ENCODE measurements at regions of chr14 and their contacts with region 1.

Region 1: GRCh38 chr14:60248697-60249318 is at the start of gene PPM1A:
- DNase-seq: peak; percentile 96
- H3K4me3 ChIP-seq: peak within 1 kb of the TSS; percentile 81 to 98 (median 96)
- H3K27ac ChIP-seq: peak within 1 kb of the TSS; percentile 85
- H3K4me1 ChIP-seq: peaks cover 26% of the 10 kb centered on the region
- H3K27me3 ChIP-seq: no peaks in the 10 kb centered on the region
- CTCF ChIP-seq: no peak
- POLR2A ChIP-seq: peak; percentile 65
- total RNA-seq, gene PPM1A: 33.9 and 36.4 TPM in 2 replicates

Region 2: DNA sequence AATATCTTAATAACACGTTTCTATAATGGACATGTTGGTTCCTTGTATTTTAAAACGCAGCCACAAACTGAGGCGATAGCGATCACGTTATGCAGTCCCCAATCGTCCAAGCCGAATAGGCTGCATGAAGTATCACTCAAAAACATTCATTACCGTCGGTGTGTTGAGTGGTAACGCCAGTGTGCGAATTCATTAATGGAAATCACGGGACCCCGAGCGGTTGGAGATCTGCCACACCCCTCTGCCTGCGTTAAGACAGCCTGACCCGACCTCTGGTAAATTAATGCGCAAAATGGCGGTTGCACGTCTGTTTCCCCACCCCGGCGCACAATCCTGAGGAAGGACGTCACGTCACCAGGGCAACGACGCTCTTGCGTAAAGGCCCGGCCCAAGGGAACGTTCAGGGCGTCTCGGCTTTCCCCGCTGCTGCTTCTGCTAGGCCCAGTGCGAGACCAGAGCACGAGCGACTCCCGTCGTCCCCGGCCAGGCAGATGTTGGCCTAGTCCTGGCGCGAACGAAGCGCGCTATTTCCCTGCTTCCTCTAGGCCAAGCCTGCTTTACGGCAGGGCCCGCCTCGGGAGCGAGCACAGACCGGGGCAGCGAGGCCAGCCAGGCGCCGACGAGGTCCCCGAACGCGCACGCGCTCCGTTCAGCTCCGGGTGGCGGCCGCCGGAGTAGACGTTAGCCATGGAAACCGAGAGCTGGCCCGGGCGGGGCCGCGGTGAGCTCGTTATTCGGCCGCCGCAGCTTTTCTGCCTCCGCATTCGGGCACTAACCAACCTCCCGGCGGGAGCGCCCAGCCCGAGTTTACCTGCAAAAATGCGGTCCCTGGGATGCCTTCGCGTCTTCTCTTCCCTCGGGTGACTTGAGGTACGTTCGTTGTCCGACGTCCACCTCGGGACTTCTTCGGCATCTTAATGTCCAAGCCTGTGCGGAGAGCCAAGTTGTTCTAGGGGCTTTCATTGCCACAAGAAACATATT is 157.0 kb before region 1 on chr14 and contains the start of gene PCNX4:
- CTCF ChIA-PET with region 1: no interaction called
- POLR2A ChIA-PET with region 1: no interaction called
- dilution Hi-C with region 1: no loop called
- intact Hi-C with region 1: loop called (anchors 1 kb)
- DNase-seq: peak; percentile 99
- H3K4me3 ChIP-seq: peak within 1 kb of the TSS; percentile 68 to 86 (median 86)
- H3K27ac ChIP-seq: peak within 1 kb of the TSS; percentile 93
- H3K4me1 ChIP-seq: peaks cover 25% of the 10 kb centered on the region
- H3K27me3 ChIP-seq: no peaks in the 10 kb centered on the region
- CTCF ChIP-seq: no peak
- POLR2A ChIP-seq: peak; percentile 96
- total RNA-seq, gene PCNX4: 41.4 and 51.6 TPM in 2 replicates

Region 3: DNA sequence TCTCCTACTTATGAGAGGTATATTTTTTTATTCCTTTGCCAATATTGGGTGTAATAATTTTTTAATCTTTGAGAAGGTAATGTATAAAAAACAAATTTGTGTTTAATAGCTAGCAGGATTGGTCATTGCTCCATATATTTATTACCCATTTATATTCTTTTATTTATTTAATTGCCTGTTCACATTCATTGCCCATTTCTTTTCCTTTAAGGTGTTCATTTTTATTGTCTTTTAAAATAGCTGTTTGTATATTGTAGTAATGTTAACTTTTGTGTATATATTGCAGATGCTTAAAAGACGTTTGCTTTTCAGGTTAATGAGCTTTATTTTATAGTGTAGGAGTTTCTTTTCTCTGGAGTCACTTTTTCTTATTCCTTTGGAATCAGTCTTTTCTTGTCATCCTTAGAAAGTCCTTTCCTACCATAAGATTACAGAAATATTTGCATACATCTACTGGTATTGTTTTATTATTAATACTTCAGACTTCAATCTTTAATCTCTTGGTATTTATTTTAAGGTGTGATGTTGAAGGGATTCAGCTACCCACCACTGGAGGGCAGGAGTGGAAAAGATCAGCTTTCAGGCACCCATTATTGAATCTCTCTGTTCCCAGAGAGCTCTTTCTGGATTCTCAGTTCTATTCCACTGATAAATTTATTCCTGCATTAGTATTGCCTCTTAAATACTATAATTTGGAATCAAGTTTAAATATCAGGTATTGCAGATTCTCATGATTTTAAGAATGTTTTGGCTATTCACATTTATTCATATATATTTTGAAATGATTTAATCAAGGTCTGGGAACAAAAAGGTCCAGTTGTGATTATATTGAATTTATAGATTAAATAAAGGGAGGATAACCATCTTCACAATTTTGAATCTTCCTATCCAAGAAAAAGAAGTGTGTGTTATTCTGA is 17.5 kb after region 1 on chr14:
- CTCF ChIA-PET with region 1: interaction called, 16 read pairs
- POLR2A ChIA-PET with region 1: no interaction called
- dilution Hi-C with region 1: no loop called
- intact Hi-C with region 1: loop called (anchors 2 kb)
- DNase-seq: peak; percentile 44
- H3K4me3 ChIP-seq: no peak overlapping the region
- H3K27ac ChIP-seq: no peak overlapping the region
- H3K4me1 ChIP-seq: no peaks in the 10 kb centered on the region
- H3K27me3 ChIP-seq: no peaks in the 10 kb centered on the region
- CTCF ChIP-seq: peak; percentile 47 to 52
- POLR2A ChIP-seq: no peak

Region 4: DNA sequence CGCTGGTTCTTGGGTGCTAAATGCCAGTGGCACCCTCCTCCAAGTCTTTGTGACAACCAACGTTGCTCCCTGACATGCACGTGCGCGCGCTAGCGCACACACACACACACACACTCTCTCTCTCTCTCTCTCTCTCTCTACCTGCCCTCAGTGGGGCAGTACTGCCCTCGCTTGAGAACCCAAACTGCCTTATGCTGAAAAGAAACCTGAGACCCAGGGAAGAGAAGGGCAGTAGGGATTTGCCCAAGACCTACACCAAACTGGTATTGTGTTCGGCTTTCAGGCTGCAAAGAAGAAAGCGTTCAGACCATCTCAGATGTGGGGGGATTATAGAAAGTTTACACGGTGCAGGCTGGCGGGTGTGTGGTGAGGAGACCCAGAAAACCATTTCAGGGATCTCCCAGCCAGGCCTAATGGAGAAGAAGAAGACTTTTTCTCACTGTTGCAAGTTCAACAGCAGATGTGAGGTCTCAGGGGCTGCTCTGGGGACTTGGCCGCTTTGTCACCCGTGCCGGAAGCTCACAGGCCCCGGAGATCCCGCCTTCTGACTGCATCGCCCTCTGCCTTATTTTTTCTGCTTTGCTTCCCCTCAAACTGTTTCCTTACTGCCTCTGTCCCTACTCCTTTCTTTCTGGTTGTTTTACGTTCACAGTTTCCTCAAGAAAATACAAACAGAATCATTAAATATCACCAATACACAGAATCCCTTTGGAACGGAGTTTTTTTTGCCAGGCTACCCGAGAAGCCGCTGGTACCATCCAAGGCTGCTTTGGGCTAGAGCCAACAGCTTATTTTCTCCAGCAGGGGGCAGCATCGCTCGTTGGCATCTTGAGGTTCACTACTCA is 82.6 kb after region 1 on chr14:
- CTCF ChIA-PET with region 1: interaction called, 10 read pairs
- POLR2A ChIA-PET with region 1: no interaction called
- dilution Hi-C with region 1: no loop called
- intact Hi-C with region 1: loop called (anchors 2 kb)
- DNase-seq: peak; percentile 78
- H3K4me3 ChIP-seq: peak overlapping the region; percentile 30 to 66 (median 41)
- H3K27ac ChIP-seq: no peak overlapping the region
- H3K4me1 ChIP-seq: peaks cover 2% of the 10 kb centered on the region
- H3K27me3 ChIP-seq: peaks cover 36 to 38% of the 10 kb centered on the region in 2 experiments
- CTCF ChIP-seq: peak; percentile 82 to 84
- POLR2A ChIP-seq: no peak

Region 5: DNA sequence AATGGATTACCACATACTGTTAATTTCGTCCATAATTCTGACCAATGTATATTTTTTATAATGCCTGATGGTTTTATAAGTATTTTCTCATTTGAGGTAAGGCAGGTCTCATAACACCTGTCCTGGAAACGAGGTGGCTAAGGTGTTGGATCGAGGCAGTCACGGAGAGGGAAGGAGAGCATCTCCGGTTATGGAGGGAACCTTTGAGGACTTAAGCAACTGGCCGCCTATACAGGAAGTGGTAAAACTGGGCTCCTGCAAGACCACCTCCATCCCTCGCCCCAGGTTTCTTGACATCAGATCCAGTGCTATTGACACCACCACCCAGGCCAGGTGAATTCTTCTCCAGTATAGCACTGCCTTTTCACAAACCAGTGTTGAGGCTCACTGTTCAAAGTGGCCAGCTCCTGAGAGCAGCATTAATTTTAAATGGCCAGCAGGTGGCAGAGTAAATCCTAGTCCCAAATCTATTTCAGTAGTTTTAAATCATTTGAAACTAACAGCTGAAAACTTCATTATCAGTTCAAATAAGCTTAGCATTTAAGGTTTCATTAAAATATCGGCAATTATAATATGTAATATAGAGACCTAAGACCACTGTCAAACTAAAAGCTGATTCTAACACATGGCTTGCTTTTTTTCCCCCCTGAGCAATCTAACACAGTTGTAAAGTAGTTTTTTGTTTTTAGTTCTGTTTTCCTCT is 101.0 kb after region 1 on chr14:
- CTCF ChIA-PET with region 1: no interaction called
- POLR2A ChIA-PET with region 1: no interaction called
- dilution Hi-C with region 1: no loop called
- intact Hi-C with region 1: no loop called
- DNase-seq: peak; percentile 51
- H3K4me3 ChIP-seq: no peak overlapping the region
- H3K27ac ChIP-seq: no peak overlapping the region
- H3K4me1 ChIP-seq: peaks cover 4% of the 10 kb centered on the region
- H3K27me3 ChIP-seq: peaks cover 8 to 24% of the 10 kb centered on the region in 2 experiments
- CTCF ChIP-seq: peak; percentile 54 to 59
- POLR2A ChIP-seq: no peak

Region 6: DNA sequence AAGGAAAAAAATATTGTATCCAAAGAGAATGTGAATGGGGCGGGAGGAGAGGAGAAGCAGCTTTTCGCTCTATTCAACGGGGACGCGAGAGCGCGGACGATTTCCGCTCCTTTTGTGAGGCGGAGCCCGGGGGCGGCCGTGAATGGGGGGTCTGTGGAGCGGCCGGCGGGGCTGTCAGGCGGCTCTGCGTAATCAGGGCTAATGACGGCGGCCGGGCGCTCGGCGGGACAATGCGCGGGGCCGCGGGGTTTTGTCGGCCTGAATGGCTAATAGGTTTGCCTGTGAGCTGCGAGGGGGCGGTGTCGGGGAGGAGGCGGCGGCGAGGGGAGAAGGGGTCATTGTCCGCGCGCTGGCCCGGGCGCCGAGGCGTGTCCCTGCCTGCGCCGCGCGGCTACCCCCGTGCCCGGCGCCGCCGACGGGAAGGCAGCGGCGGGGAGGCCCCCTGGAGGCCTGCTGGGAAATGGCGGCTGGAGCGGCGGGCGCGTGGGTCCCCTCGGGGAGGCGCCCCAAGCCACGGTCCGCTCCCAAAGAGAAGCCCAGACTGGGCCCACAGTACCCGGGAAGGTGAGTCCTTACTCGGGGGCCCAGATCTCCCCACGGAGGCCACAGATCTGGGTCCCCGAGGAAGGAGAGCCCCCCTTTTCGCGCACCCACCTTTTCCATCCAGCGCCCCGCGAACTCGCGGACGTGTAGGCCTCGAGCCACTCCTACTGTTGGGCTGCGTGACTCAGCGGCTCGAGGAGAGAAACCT is 266.1 kb after region 1 on chr14:
- CTCF ChIA-PET with region 1: no interaction called
- POLR2A ChIA-PET with region 1: no interaction called
- dilution Hi-C with region 1: no loop called
- intact Hi-C with region 1: no loop called
- DNase-seq: no peak
- H3K4me3 ChIP-seq: peak overlapping the region; percentile 11 to 40 (median 13)
- H3K27ac ChIP-seq: no peak overlapping the region
- H3K4me1 ChIP-seq: peaks cover 3% of the 10 kb centered on the region
- H3K27me3 ChIP-seq: peaks cover 63 to 96% of the 10 kb centered on the region in 2 experiments
- CTCF ChIP-seq: peak; percentile 48 to 49
- POLR2A ChIP-seq: no peak

Region 7: GRCh38 chr14:60724137-60724619 is 475.4 kb after region 1 on chr14 and contains the start of gene SIX4:
- CTCF ChIA-PET with region 1: no interaction called
- POLR2A ChIA-PET with region 1: no interaction called
- dilution Hi-C with region 1: no loop called
- intact Hi-C with region 1: loop called (anchors 5 kb)
- DNase-seq: peak; percentile 85
- H3K4me3 ChIP-seq: peak within 1 kb of the TSS; percentile 81 to 94 (median 86)
- H3K27ac ChIP-seq: peak within 1 kb of the TSS; percentile 57
- H3K4me1 ChIP-seq: peaks cover 8% of the 10 kb centered on the region
- H3K27me3 ChIP-seq: peaks cover 9 to 16% of the 10 kb centered on the region in 2 experiments
- CTCF ChIP-seq: no peak
- POLR2A ChIP-seq: peak; percentile 75
- total RNA-seq, gene SIX4: 4.7 and 7.5 TPM in 2 replicates

Measured in endothelial cell of umbilical vein (primary cell).